Head of caudate nucleus (tissue), 42 donors: ENCODE measurements at regions of chr12 and their contacts with region 1.

Region 1: GRCh38 chr12:131608740-131609690 is 101.9 kb upstream of the SFSWAP start:
- DNase-seq: peak; percentile 74 to 96 (median 87)

Region 2: GRCh38 chr12:131710464-131711457 is 101.7 kb after region 1 on chr12 and contains the start of gene SFSWAP:
- intact Hi-C with region 1: loop called (anchors 5 kb)
- DNase-seq: peak; percentile 33 to 92 (median 82)